CD8-positive, alpha-beta T cell (primary cell): ENCODE measurements at regions of chr11 and their contacts with region 1.

Region 1: DNA sequence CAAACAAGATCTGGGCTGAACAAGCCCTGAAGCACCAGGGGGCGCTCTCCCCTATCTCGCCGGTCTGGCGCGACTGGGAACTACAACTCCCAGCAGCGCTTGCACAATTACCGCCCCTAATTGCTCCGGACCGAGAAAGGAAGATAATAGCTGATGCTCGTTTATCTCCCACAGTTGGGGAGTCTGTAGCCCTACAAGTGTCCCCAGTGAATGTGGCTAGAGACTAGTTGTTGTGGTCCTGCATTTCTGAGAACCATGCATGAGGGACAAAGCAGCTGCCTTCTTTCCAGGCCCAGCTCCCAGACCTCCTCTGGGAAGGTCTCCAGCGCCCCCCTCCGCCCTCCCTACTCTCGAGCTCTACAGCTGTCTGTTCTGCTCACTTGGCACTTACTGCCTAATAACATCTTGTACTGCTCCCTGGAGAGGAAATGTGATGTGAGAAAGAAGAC is 34.4 kb downstream of the NRXN2 start:
- DNase-seq: peak; percentile 80 to 97 (median 93)
- ATAC-seq: peak; percentile 99
- H3K4me3 ChIP-seq: peak overlapping the region; percentile 21 to 44
- H3K4me3 Mint-ChIP-seq: peak overlapping the region; percentile 64
- H3K27ac ChIP-seq: peak overlapping the region in 1 of 2 experiments; percentile 23
- H3K27ac Mint-ChIP-seq: peak overlapping the region; percentile 63
- H3K4me1 ChIP-seq: peaks cover 18% of the 10 kb centered on the region
- H3K4me1 Mint-ChIP-seq: peaks cover 21% of the 10 kb centered on the region
- H3K27me3 ChIP-seq: no peaks in the 10 kb centered on the region
- H3K27me3 Mint-ChIP-seq: peaks cover 8% of the 10 kb centered on the region
- CTCF ChIP-seq: peak; percentile 94

Region 2: GRCh38 chr11:64341851-64342791 is 346.4 kb before region 1 on chr11:
- CTCF ChIA-PET with region 1: no interaction called
- POLR2A ChIA-PET with region 1: no interaction called
- intact Hi-C with region 1: no loop called
- DNase-seq: peak; percentile 75 to 90 (median 88)
- ATAC-seq: peak; percentile 63
- H3K4me3 ChIP-seq: no peak overlapping the region
- H3K4me3 Mint-ChIP-seq: peak overlapping the region; percentile 84
- H3K27ac ChIP-seq: peak overlapping the region in 1 of 2 experiments; percentile 86
- H3K27ac Mint-ChIP-seq: no peak overlapping the region
- H3K4me1 ChIP-seq: peaks cover 34% of the 10 kb centered on the region
- H3K4me1 Mint-ChIP-seq: peaks cover 41% of the 10 kb centered on the region
- H3K27me3 ChIP-seq: no peaks in the 10 kb centered on the region
- H3K27me3 Mint-ChIP-seq: no peaks in the 10 kb centered on the region
- CTCF ChIP-seq: peak; percentile 36

Region 3: DNA sequence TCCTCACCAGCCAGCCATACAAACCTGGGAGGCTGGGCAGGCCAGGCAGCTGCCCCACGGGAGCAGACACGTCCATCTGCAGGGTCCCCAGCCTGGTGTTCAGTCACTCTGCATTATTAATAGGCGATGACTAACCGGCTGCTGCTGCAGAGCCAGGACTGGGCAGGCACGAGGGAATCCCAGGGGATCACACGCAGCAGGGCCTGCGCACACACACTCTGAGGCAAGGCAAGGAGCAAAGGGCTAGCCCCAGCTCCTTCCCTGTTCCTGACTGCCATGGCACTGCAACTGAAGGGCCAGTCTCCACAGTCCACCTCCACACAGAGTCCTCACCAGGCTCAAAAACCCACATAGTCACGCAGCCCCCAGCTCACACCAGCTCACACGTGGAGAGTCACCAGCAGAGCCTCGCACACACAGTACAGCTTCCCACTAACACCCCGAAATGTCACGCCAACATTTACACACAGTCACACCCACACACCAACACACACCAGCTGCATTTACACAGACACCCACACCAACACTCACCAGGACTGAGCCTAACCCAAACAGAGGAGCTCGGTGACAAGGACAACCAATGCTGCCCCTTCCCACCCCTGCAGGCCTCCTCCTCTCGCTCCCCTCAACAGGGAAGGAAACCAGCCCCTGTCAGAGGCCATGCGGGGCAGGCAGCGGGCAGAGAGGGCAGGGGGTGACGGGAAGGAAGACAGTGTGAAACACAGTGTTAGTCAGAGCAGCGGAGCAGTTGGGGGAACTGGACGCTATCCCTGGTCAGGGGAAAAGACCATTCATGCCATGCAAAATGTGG is 12.9 kb before region 1 on chr11:
- CTCF ChIA-PET with region 1: interaction called, 13 read pairs
- POLR2A ChIA-PET with region 1: no interaction called
- intact Hi-C with region 1: no loop called
- DNase-seq: no peak
- ATAC-seq: no peak
- H3K4me3 ChIP-seq: no peak overlapping the region
- H3K4me3 Mint-ChIP-seq: no peak overlapping the region
- H3K27ac ChIP-seq: no peak overlapping the region
- H3K27ac Mint-ChIP-seq: no peak overlapping the region
- H3K4me1 ChIP-seq: no peaks in the 10 kb centered on the region
- H3K4me1 Mint-ChIP-seq: no peaks in the 10 kb centered on the region
- H3K27me3 ChIP-seq: peaks cover 0 to 5% of the 10 kb centered on the region in 2 experiments
- H3K27me3 Mint-ChIP-seq: peaks cover 40% of the 10 kb centered on the region
- CTCF ChIP-seq: no peak

Region 4: GRCh38 chr11:64703048-64703447 is 14.5 kb after region 1 on chr11:
- CTCF ChIA-PET with region 1: interaction called, 22 read pairs
- POLR2A ChIA-PET with region 1: interaction called, 5 read pairs
- intact Hi-C with region 1: no loop called
- DNase-seq: no peak
- ATAC-seq: no peak
- H3K4me3 ChIP-seq: no peak overlapping the region
- H3K4me3 Mint-ChIP-seq: no peak overlapping the region
- H3K27ac ChIP-seq: no peak overlapping the region
- H3K27ac Mint-ChIP-seq: no peak overlapping the region
- H3K4me1 ChIP-seq: no peaks in the 10 kb centered on the region
- H3K4me1 Mint-ChIP-seq: no peaks in the 10 kb centered on the region
- H3K27me3 ChIP-seq: peaks cover 0 to 1% of the 10 kb centered on the region in 2 experiments
- H3K27me3 Mint-ChIP-seq: peaks cover 18% of the 10 kb centered on the region
- CTCF ChIP-seq: no peak

Region 5: GRCh38 chr11:64723117-64723906 is 34.8 kb after region 1 on chr11 and contains the start of gene NRXN2:
- CTCF ChIA-PET with region 1: interaction called, 21 read pairs
- POLR2A ChIA-PET with region 1: interaction called, 3 read pairs
- intact Hi-C with region 1: loop called (anchors 1 kb)
- DNase-seq: peak; percentile 62 to 94 (median 83)
- ATAC-seq: peak; percentile 94
- H3K4me3 ChIP-seq: peak within 1 kb of the TSS; percentile 71 to 78
- H3K4me3 Mint-ChIP-seq: peak within 1 kb of the TSS; percentile 70
- H3K27ac ChIP-seq: peak within 1 kb of the TSS; percentile 49 to 71
- H3K27ac Mint-ChIP-seq: no peak within 1 kb of the TSS
- H3K4me1 ChIP-seq: peaks cover 21% of the 10 kb centered on the region
- H3K4me1 Mint-ChIP-seq: peaks cover 18% of the 10 kb centered on the region
- H3K27me3 ChIP-seq: peaks cover 0 to 7% of the 10 kb centered on the region in 2 experiments
- H3K27me3 Mint-ChIP-seq: peaks cover 9% of the 10 kb centered on the region
- CTCF ChIP-seq: peak; percentile 97
- total RNA-seq, gene NRXN2: 0.17 to 0.43 TPM

Region 6: GRCh38 chr11:64734811-64735724 is 46.5 kb after region 1 on chr11:
- CTCF ChIA-PET with region 1: interaction called, 10 read pairs
- POLR2A ChIA-PET with region 1: interaction called, 3 read pairs
- intact Hi-C with region 1: no loop called
- DNase-seq: no peak
- ATAC-seq: no peak
- H3K4me3 ChIP-seq: no peak overlapping the region
- H3K4me3 Mint-ChIP-seq: no peak overlapping the region
- H3K27ac ChIP-seq: no peak overlapping the region
- H3K27ac Mint-ChIP-seq: peak overlapping the region; percentile 77
- H3K4me1 ChIP-seq: peaks cover 9% of the 10 kb centered on the region
- H3K4me1 Mint-ChIP-seq: peaks cover 33% of the 10 kb centered on the region
- H3K27me3 ChIP-seq: no peaks in the 10 kb centered on the region
- H3K27me3 Mint-ChIP-seq: no peaks in the 10 kb centered on the region
- CTCF ChIP-seq: no peak

Region 7: DNA sequence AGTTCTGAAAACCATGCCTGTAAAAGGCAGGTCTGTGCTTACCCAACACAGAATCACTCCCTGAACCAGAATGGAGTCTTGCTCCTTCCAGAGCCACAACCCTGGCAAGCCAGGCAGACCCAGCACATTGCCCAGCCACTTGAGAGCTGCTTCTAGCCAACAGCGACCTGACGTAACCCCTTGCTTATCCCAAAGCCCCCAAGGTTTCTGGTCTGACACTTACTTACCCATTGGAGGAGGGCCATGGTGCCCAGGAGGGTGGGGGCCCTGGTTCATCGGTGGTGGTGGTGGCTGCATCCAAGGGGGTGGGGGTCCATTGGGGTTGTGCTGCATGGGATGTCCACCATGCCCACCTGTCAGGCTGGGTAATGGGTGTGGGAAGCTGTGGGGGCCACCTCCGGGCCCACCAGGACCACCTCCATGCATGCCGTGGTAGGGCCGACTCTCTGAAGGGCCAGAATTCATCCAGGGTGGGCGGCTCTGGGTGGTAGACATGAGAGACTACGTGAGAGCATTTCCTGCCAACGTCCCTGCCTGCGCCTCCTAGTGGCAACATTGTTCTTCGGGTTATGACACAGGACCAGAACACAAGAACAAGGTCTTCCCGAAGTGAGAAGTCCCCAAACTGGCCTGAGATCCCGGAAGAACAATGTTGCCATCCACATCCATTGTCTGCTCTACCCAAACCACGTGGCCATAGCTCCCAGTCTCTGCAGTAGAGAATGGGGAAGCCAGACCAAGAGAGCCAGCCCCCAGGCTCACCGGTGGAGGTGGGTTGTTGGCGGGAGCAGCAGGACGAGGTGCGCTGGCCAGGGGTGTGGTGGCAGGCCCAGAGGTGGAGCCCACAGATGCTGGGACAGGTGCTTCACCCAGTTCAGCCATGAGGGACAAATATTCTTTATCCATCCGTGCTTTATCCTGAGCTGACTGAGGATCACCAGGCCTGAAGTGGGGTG is 79.1 kb after region 1 on chr11:
- CTCF ChIA-PET with region 1: interaction called, 6 read pairs
- POLR2A ChIA-PET with region 1: interaction called, 4 read pairs
- intact Hi-C with region 1: loop called in 1 of 2 experiments (anchors 2 kb)
- DNase-seq: peak; percentile 65 to 91 (median 86)
- ATAC-seq: peak; percentile 25
- H3K4me3 ChIP-seq: peak overlapping the region in 1 of 2 experiments; percentile 33
- H3K4me3 Mint-ChIP-seq: peak overlapping the region; percentile 58
- H3K27ac ChIP-seq: peak overlapping the region; percentile 11 to 44
- H3K27ac Mint-ChIP-seq: peak overlapping the region; percentile 94
- H3K4me1 ChIP-seq: peaks cover 96% of the 10 kb centered on the region
- H3K4me1 Mint-ChIP-seq: peaks cover 88% of the 10 kb centered on the region
- H3K27me3 ChIP-seq: no peaks in the 10 kb centered on the region
- H3K27me3 Mint-ChIP-seq: no peaks in the 10 kb centered on the region
- CTCF ChIP-seq: peak; percentile 81

Region 8: DNA sequence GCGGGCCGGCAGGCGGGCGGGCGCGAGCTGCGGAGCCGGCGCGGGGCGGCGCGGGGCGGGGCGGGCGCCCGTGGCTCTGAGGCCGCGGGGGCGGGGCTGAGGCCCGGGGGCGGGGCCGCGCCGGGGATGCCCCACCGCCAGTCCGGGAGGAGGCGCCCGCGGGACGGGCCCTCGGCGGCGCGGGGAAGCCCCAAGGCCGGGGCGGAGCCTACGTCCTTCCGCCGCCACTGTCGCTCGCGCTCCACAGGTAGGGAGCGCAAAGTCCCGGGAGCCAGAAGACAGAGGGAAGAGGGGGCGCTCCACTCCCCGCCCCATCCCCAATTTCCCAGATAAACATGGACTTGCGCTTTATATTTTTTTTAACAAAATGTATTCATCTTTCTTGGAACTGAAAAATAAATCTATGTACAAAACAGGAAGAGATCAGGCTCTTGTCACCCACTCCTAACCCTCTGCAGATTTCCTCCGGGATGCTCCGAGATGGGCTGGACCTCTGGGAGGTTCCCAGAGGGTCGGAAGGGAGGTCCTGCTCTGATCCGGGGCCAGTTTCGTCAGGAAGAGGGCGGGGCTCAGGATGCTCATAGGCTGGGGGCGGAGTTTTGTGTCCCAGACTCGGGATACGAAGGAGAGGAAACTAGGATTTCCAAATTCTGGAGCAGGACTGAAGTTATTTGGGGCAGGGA is 114.7 kb after region 1 on chr11 and contains the start of gene MAP4K2:
- CTCF ChIA-PET with region 1: no interaction called
- POLR2A ChIA-PET with region 1: no interaction called
- intact Hi-C with region 1: loop called in 1 of 2 experiments (anchors 2 kb)
- DNase-seq: peak; percentile 62 to 94 (median 83)
- ATAC-seq: peak; percentile 92
- H3K4me3 ChIP-seq: peak within 1 kb of the TSS; percentile 70 to 79
- H3K4me3 Mint-ChIP-seq: peak within 1 kb of the TSS; percentile 83
- H3K27ac ChIP-seq: peak within 1 kb of the TSS; percentile 65 to 93
- H3K27ac Mint-ChIP-seq: peak within 1 kb of the TSS; percentile 90
- H3K4me1 ChIP-seq: peaks cover 30% of the 10 kb centered on the region
- H3K4me1 Mint-ChIP-seq: peaks cover 37% of the 10 kb centered on the region
- H3K27me3 ChIP-seq: no peaks in the 10 kb centered on the region
- H3K27me3 Mint-ChIP-seq: no peaks in the 10 kb centered on the region
- CTCF ChIP-seq: no peak
- total RNA-seq, gene MAP4K2: 56.2 to 60.1 TPM

Region 9: DNA sequence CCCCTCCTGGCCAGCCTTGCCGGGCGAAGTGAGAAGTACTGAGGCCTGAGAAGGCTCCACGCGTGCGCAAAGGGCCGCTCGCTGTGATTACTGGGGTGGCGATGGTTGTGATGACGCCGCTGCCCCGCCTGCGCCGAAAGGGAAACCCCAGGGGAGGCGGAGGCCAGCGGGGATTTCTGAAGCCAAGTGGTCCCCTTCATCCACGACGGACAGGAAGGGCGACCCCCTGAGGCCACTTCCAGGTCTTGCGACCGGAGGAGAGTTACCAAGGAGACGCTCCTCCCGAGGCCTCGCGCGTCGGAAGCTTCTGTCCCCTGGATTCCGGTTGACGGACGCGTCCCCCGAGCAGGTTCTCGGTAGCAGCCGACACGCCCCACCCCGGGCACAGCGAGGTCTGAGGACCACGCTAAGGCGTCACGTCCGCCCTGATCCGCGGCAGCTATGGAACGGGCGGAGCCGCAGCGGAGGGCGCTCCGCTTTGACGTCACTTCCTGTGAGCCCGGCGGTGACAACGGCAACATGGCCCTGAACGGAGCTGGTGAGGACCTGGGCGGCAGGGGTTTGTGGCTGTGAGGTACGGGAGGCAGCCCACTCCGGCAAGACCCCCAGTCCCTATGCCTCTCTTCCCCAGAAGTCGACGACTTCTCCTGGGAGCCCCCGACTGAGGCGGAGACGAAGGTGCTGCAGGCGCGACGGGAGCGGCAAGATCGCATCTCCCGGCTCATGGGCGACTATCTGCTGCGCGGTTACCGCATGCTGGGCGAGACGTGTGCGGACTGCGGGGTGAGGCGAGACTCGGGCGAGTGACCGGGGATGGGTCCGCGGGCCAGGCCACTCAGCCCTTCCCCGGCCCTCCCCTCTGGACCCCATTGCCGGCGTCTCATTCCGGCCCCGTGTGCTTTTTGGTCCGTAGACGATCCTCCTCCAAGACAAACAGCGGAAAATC is 881.7 kb after region 1 on chr11 and contains the start of gene ZNRD2:
- CTCF ChIA-PET with region 1: no interaction called
- POLR2A ChIA-PET with region 1: no interaction called
- intact Hi-C with region 1: no loop called
- DNase-seq: peak; percentile 96 to 99 (median 98)
- ATAC-seq: peak; percentile 69
- H3K4me3 ChIP-seq: peak within 1 kb of the TSS; percentile 92 to 94
- H3K4me3 Mint-ChIP-seq: peak within 1 kb of the TSS; percentile 99
- H3K27ac ChIP-seq: peak within 1 kb of the TSS; percentile 94 to 99
- H3K27ac Mint-ChIP-seq: peak within 1 kb of the TSS; percentile 99
- H3K4me1 ChIP-seq: peaks cover 76% of the 10 kb centered on the region
- H3K4me1 Mint-ChIP-seq: peaks cover 76% of the 10 kb centered on the region
- H3K27me3 ChIP-seq: no peaks in the 10 kb centered on the region
- H3K27me3 Mint-ChIP-seq: no peaks in the 10 kb centered on the region
- CTCF ChIP-seq: no peak
- total RNA-seq, gene ZNRD2: 35.6 to 41.4 TPM